ENCODE measurements at regions of chr10 and their contacts with region 1.

Region 1: GRCh38 chr10:42866115-42866995 is 83.8 kb downstream of the BMS1 start:
- DNase-seq: peak; percentile 55 to 84
- H3K4me3 ChIP-seq: no peak overlapping the region
- H3K27ac ChIP-seq: no peak overlapping the region
- H3K4me1 ChIP-seq: no peaks in the 10 kb centered on the region
- H3K27me3 ChIP-seq: peaks cover 12% of the 10 kb centered on the region; the same call in 1 of the 2 replicates
- CTCF ChIP-seq: peak; percentile 83

Region 2: GRCh38 chr10:42975558-42976340 is 109.4 kb after region 1 on chr10:
- CTCF ChIA-PET with region 1: no interaction called
- POLR2A ChIA-PET with region 1: no interaction called
- intact Hi-C with region 1: loop called (anchors 10 kb)
- DNase-seq: peak; percentile 16 to 44
- H3K4me3 ChIP-seq: no peak overlapping the region
- H3K27ac ChIP-seq: no peak overlapping the region
- H3K4me1 ChIP-seq: no peaks in the 10 kb centered on the region
- H3K27me3 ChIP-seq: no peaks in the 10 kb centered on the region
- CTCF ChIP-seq: peak; percentile 27; the same call in 1 of the 2 replicates

Region 3: DNA sequence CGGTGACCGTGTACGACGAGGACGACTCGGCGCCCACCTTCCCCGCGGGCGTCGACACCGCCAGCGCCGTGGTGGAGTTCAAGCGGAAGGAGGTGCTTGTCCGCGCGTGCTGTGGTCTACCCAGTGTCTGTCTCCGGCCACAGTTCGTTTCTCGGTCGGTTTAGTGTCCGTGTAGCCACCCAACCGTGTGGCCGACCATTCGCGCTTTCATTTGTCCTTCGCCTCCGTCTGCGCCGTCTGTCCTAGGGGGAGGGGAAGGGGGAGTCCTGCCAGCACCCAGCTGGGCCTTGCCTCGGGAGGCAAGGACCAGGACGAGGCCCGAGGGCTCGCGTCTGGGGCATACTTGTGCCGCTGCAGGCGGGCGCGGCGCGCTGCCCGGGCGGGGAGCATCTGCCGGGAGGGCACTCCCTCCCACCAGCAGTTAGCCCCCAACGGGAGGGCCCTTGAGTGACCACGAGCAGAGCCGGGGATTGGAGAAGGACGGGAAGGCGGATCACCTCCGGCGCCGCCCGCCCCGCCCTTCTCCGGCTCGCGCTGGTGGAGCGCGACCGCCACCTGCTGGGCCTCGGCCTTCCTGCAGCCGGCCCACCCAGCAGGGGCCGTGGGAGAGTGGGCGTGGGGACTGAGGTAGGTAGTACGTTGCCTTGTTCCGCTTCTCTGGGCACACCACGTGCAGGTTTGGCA is 238.9 kb after region 1 on chr10:
- CTCF ChIA-PET with region 1: no interaction called
- POLR2A ChIA-PET with region 1: no interaction called
- intact Hi-C with region 1: loop called (anchors 1 kb)
- DNase-seq: peak in 1 of 2 experiments; percentile 79
- H3K4me3 ChIP-seq: peak overlapping the region; percentile 53; the same call in 1 of the 2 replicates
- H3K27ac ChIP-seq: no peak overlapping the region
- H3K4me1 ChIP-seq: 0 out of 2 replicates have a peak, but pooled peaks cover 4% of the 10 kb centered on the region
- H3K27me3 ChIP-seq: peaks cover 7% of the 10 kb centered on the region; the same call in 1 of the 2 replicates
- CTCF ChIP-seq: peak; percentile 99

Region 4: DNA sequence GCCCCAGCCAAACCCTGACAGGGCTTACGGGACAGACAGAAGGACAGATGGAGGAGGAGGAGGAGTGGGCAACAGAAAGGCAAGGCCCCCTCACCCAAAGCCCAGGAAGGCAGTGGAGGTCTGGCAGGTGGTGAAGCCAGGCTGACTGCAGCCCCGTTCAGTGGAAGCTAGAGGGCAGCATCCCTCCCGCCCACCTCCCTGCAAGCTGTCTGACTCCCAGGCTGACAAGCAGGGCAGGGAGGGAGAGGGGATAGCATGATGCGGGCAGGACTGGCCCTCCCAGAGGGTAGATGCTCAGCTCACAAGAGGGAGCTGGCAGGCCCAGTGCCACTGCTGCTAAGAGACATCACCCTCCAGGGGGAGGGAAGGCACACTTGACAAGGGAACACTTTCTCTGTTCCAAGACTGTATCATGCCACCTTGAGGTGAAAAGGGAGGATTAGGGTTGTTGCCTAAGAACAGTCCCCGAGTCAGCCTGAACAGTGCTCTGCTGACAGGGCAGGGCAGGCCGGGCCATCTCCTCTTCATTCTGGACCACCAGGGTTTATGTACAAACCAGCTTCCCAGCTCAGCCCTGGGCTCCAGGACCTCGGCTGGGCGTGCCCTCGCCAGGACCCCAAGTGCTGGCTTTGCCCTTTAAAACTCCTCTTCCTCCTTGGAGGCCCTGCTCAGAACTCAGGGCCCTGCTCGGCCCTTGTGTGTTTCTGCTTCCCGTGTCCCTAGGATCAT is 338.8 kb after region 1 on chr10:
- CTCF ChIA-PET with region 1: no interaction called
- POLR2A ChIA-PET with region 1: no interaction called
- intact Hi-C with region 1: loop called (anchors 10 kb)
- DNase-seq: peak; percentile 50 to 66
- H3K4me3 ChIP-seq: no peak overlapping the region
- H3K27ac ChIP-seq: no peak overlapping the region
- H3K4me1 ChIP-seq: no peaks in the 10 kb centered on the region
- H3K27me3 ChIP-seq: no peaks in the 10 kb centered on the region
- CTCF ChIP-seq: peak; percentile 91

Region 5: DNA sequence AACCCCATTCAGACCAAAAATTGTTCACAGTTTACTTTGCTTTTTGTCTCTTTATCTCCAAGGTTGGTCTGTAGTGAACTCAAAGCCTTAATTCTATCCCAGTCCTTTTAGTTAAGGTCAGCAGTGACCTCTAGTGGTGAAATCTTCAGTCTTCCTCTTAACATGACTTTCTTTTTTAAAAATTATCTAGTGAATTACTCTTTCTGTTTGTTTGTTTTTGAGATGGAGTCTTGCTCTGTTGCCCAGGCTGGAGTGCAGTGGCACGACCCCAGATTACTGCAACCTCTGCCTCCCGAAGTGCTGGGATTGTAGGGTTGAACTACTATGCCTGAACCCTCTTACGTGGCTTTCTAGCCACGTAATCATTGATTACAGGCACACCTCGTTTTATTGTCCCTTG is 595.6 kb after region 1 on chr10:
- CTCF ChIA-PET with region 1: interaction called, 8 read pairs
- POLR2A ChIA-PET with region 1: no interaction called
- intact Hi-C with region 1: loop called (anchors 1 kb)
- DNase-seq: peak; percentile 25 to 65
- H3K4me3 ChIP-seq: no peak overlapping the region
- H3K27ac ChIP-seq: no peak overlapping the region
- H3K4me1 ChIP-seq: no peaks in the 10 kb centered on the region
- H3K27me3 ChIP-seq: no peaks in the 10 kb centered on the region
- CTCF ChIP-seq: peak; percentile 89

Measured in PC-9 (cell line).